Cardiac septum (tissue), 1 donor: ENCODE measurements at regions of chr10 and their contacts with region 1.

Region 1: GRCh38 chr10:120942806-120943413 is 91.7 kb downstream of the WDR11 start:
- DNase-seq: peak; percentile 86

Region 2: GRCh38 chr10:121734589-121735045 is 791.7 kb after region 1 on chr10:
- intact Hi-C with region 1: loop called (anchors 2 kb)
- DNase-seq: no peak